ENCODE measurements at regions of chr20 and their contacts with region 1.

Region 1: DNA sequence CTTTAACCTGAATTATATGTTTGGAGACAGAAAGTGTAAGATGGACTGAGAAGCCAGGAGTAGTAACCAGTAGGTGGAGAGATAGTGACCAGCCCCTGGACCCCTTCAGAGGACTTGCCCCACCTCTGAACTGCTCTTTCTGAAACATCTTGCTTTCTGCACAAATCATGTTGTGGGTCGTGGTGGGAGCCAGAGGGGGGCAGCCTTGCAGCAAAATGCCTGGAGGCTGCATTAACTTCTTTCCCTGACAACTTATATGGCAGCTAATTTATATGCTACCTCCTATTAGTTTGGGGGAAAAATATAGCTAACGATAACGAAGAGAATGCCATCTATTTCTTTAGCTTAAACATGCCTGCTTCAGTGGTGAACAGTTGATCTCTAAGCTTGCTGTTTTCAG is 859.8 kb downstream of the MAFB start:
- DNase-seq: no peak
- H3K4me3 Mint-ChIP-seq: no peak overlapping the region
- H3K27ac Mint-ChIP-seq: no peak overlapping the region
- H3K4me1 Mint-ChIP-seq: peaks cover 18% of the 10 kb centered on the region
- H3K27me3 Mint-ChIP-seq: no peaks in the 10 kb centered on the region
- CTCF ChIP-seq: no peak

Region 2: DNA sequence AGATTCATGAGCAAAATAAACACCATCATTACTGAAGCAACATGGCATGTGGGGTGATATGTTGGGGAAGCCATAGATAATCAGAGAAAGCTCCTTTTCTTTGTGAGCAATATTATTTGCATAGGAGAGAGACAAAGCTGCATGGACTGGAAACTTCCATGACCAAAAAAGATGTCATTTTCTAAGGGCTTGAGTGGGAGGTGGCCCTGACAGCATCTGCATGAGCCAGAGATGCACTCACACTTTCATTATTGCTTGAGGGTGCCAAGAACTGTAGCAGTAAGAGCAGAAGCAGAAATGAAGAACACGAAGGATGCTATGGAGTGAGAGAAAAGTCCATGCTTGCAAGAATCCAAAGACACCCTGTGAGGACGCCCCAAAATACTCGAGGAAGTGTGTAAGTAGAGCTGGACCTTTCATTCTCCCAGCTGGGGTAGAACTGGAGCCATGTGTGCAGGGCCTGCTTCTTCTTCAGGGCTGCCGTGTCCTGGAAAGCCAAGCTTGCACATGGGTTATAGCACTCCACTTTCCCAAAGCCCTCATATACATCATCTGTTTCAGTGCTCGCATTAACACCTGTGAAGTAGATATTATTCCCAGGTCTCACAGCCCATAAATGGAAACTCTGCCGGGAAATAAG is 15.9 kb before region 1 on chr20:
- CTCF ChIA-PET with region 1: interaction called, 8 read pairs
- POLR2A ChIA-PET with region 1: interaction called, 49 read pairs
- intact Hi-C with region 1: no loop called
- DNase-seq: no peak
- H3K4me3 Mint-ChIP-seq: no peak overlapping the region
- H3K27ac Mint-ChIP-seq: peak overlapping the region; percentile 89
- H3K4me1 Mint-ChIP-seq: peaks cover 16% of the 10 kb centered on the region
- H3K27me3 Mint-ChIP-seq: no peaks in the 10 kb centered on the region
- CTCF ChIP-seq: no peak

Region 3: GRCh38 chr20:39849664-39850063 is 20.4 kb after region 1 on chr20:
- CTCF ChIA-PET with region 1: interaction called, 10 read pairs
- POLR2A ChIA-PET with region 1: interaction called, 28 read pairs
- intact Hi-C with region 1: no loop called
- DNase-seq: peak; percentile 94
- H3K4me3 Mint-ChIP-seq: no peak overlapping the region
- H3K27ac Mint-ChIP-seq: no peak overlapping the region
- H3K4me1 Mint-ChIP-seq: peaks cover 38% of the 10 kb centered on the region
- H3K27me3 Mint-ChIP-seq: no peaks in the 10 kb centered on the region
- CTCF ChIP-seq: no peak